OCI-LY7 (cell line): ENCODE measurements at regions of chr9 and their contacts with region 1.

Region 1: GRCh38 chr9:92133949-92134604 is 18.9 kb upstream of the SPTLC1 start:
- DNase-seq: peak; percentile 74
- H3K4me3 ChIP-seq: no peak overlapping the region
- H3K27ac ChIP-seq: no peak overlapping the region
- H3K4me1 ChIP-seq: no peaks in the 10 kb centered on the region
- CTCF ChIP-seq: peak; percentile 91

Region 2: DNA sequence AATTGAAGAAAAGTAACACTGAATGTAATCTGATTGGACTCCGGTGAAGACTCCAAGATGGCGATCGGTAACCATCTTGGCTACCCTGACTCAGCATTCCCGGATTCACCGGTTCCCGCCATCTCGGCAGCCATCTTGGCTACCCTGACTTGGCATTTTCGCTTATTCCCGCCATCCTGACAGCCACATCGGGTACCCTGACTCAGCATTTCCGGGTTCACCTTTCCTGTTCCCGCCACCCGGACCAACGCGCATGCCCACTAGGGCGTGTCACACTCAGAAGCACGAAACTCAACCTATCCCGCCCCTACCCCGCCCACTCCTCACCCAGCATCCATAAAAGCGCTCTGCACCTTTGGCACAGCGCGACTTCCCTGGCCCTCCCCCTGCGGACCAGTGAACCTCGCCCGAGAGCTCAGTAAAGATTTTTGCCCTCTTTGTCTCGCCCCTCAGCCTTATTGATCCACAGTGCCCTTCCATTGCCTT is 36.0 kb before region 1 on chr9:
- CTCF ChIA-PET with region 1: interaction called, 10 read pairs
- POLR2A ChIA-PET with region 1: no interaction called
- intact Hi-C with region 1: no loop called
- DNase-seq: no peak
- H3K4me3 ChIP-seq: no peak overlapping the region
- H3K27ac ChIP-seq: no peak overlapping the region
- H3K4me1 ChIP-seq: no peaks in the 10 kb centered on the region
- CTCF ChIP-seq: no peak

Region 3: GRCh38 chr9:92108122-92108521 is 26.0 kb before region 1 on chr9:
- CTCF ChIA-PET with region 1: no interaction called
- POLR2A ChIA-PET with region 1: no interaction called
- intact Hi-C with region 1: no loop called
- DNase-seq: no peak
- H3K4me3 ChIP-seq: no peak overlapping the region
- H3K27ac ChIP-seq: no peak overlapping the region
- H3K4me1 ChIP-seq: no peaks in the 10 kb centered on the region
- CTCF ChIP-seq: no peak

Region 4: GRCh38 chr9:92242260-92243136 is 108.4 kb after region 1 on chr9:
- CTCF ChIA-PET with region 1: no interaction called
- POLR2A ChIA-PET with region 1: no interaction called
- intact Hi-C with region 1: loop called (anchors 10 kb)
- DNase-seq: no peak
- H3K4me3 ChIP-seq: no peak overlapping the region
- H3K27ac ChIP-seq: no peak overlapping the region
- H3K4me1 ChIP-seq: no peaks in the 10 kb centered on the region
- CTCF ChIP-seq: 0 out of 2 replicates have a peak, but pooled peaks have one; percentile 35

Region 5: GRCh38 chr9:92325269-92325990 is 191.4 kb after region 1 on chr9 and contains the starts of genes CENPP and NOL8:
- CTCF ChIA-PET with region 1: no interaction called
- POLR2A ChIA-PET with region 1: no interaction called
- intact Hi-C with region 1: loop called (anchors 10 kb)
- DNase-seq: peak; percentile 92
- H3K4me3 ChIP-seq: peak within 1 kb of the TSS; percentile 92
- H3K27ac ChIP-seq: peak within 1 kb of the TSS; percentile 61
- H3K4me1 ChIP-seq: peaks cover 29% of the 10 kb centered on the region
- CTCF ChIP-seq: no peak
- total RNA-seq, gene CENPP: 30.9 and 42.0 TPM in 2 replicates
- total RNA-seq, gene NOL8: 29.3 and 30.1 TPM in 2 replicates

Region 6: DNA sequence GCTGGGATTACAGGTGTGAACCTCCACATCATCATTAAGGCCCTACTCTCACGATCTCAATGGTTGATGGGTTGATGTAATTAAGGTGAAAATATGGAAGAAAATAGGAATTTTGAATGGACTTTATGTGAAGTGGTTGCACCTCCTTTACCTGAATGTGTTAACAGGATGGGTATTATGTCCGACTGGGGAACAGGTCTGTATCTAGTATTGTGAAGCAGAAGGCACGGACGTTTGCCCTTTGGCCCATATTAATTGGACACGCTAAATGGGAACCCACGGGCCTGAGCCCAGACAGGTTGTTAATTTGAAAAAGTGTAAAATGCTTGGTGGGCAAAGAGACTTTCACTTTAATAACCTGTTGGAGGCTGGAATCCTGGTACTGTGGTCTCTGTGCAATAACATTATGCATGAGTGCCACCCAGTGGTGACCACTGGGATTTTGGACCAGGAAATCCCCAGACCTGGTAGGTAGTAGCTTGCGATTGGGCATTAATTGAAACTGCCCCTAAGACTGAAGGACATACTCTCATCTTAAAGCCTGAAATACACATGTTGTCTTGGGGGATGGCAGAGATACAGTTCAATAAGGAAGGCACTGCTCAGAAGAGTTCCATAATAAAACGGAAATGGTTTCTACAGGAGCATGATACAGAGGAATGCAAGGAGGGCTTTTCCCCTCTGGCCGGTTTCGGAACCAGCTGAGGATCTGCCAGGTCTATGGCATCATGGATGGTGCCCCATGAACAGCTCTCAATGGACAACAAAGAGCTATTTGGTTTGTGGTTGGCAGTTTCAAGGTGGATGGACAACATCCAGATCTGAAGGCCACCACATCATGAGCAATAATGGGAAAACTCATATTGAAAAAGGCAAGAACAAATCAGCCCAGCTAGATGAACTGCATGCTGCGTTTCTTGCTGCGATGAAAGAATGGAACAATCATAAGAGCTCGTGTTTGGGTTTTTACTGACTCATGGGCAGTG is 656.8 kb after region 1 on chr9:
- CTCF ChIA-PET with region 1: no interaction called
- POLR2A ChIA-PET with region 1: no interaction called
- intact Hi-C with region 1: loop called (anchors 10 kb)
- DNase-seq: peak; percentile 84
- H3K4me3 ChIP-seq: no peak overlapping the region
- H3K27ac ChIP-seq: no peak overlapping the region
- H3K4me1 ChIP-seq: peaks cover 18% of the 10 kb centered on the region
- CTCF ChIP-seq: peak; percentile 97